Activated T-helper 1 cell treated with anti-CD3 and anti-CD28 coated beads, Interleukin-12 subunit alpha, Interleukin-12 subunit beta, Interleukin-2, Interleukin-4 antibody, amounts not matched to agents 30 ng/mL and 10 ng/mL and 1 ng/mL, durations not matched to agents 14 hours and 24 hours and 36 hours (primary cell): ENCODE measurements at regions of chrX and their contacts with region 1.

Region 1: DNA sequence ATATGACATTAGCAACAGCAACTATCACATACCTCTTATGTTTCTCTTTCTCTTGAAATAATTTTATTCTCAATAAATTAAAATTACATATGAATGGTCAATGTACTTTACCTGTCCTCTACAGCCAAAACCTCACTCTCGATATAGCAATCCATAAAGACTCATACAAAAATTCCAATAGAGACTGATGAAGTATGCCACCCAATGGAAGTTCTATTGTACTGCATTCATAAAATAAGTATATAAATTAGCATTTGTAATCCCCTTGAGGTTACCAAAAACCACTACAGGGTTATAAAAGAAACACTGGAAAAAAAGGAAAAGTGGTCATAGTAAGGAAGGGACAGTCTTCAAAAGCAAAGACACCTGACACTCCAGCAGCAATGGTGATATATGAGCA is 32.8 kb downstream of the CLDN2 start:
- DNase-seq: no peak
- H3K4me3 Mint-ChIP-seq: no peak overlapping the region
- H3K27ac Mint-ChIP-seq: no peak overlapping the region
- H3K4me1 Mint-ChIP-seq: no peaks in the 10 kb centered on the region
- H3K27me3 Mint-ChIP-seq: no peaks in the 10 kb centered on the region

Region 2: DNA sequence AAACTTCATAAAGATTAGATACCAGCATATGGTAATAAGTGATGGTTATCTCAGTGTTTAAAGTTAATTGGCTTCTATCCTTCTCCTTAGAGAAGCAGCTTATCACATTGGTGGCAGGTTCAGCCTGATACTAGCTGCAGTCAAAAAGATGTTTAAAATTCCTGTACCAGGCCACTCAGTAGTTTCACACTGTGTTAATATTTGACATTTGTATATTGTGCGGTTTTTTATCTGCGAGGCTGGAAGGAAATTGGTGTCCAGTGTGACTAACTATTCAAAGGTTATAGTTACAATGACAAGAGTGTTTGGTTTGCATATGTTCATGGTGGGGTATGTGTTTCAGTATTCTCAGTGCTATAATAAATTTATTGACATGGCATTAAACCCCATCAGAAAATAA is 178.0 kb before region 1 on chrX:
- intact Hi-C with region 1: no loop called
- DNase-seq: no peak
- H3K4me3 Mint-ChIP-seq: no peak overlapping the region
- H3K27ac Mint-ChIP-seq: no peak overlapping the region
- H3K4me1 Mint-ChIP-seq: no peaks in the 10 kb centered on the region
- H3K27me3 Mint-ChIP-seq: no peaks in the 10 kb centered on the region

Region 3: GRCh38 chrX:106894392-106894909 is 58.5 kb before region 1 on chrX:
- intact Hi-C with region 1: loop called (anchors 1 kb)
- DNase-seq: peak; percentile 18
- H3K4me3 Mint-ChIP-seq: no peak overlapping the region
- H3K27ac Mint-ChIP-seq: no peak overlapping the region
- H3K4me1 Mint-ChIP-seq: no peaks in the 10 kb centered on the region
- H3K27me3 Mint-ChIP-seq: no peaks in the 10 kb centered on the region